AG04450 (cell line): ENCODE measurements at regions of chr9 and their contacts with region 1.

Region 1: GRCh38 chr9:4077499-4078102 is 222.3 kb downstream of the GLIS3 start:
- DNase-seq: peak; percentile 29
- H3K4me3 ChIP-seq: no peak overlapping the region
- H3K27ac ChIP-seq: no peak overlapping the region
- H3K27me3 ChIP-seq: no peaks in the 10 kb centered on the region
- CTCF ChIP-seq: peak; percentile 70

Region 2: DNA sequence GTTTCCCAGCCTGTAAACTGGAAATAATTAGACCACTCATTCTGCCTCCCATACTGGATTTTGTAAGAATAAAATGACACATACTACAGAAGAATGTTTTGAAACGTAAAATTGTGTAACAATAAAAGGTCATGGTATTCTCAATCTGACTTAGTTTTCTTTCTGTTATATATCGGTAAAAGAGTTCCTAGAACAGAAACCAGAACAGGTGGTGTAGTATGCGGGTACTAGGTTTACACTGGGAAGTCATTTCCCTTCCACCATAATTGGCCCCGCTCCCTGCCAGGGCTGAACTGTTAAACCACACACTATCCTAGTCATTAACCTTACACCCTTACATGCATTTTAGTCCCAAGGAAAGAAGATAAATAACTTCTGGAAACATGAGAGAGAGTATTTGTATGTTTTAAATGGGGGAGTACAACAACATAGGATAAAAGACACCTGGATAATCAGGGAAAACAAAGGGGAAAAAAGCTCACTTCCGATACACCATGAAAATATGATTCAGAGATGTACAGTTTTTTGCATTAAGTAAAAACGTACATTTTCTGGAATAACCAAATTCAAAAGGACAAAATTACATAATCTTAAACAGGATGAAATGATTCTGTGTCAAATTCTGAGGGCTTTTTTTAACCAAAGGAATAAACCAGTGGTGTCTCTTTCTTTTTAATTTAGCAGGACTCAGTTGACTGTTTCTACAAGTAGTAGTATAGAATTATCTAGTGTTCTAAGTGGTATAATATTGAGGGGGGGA is 22.6 kb after region 1 on chr9:
- CTCF ChIA-PET with region 1: interaction called, 12 read pairs
- POLR2A ChIA-PET with region 1: no interaction called
- DNase-seq: no peak
- H3K4me3 ChIP-seq: no peak overlapping the region
- H3K27ac ChIP-seq: no peak overlapping the region
- H3K27me3 ChIP-seq: no peaks in the 10 kb centered on the region
- CTCF ChIP-seq: no peak

Region 3: DNA sequence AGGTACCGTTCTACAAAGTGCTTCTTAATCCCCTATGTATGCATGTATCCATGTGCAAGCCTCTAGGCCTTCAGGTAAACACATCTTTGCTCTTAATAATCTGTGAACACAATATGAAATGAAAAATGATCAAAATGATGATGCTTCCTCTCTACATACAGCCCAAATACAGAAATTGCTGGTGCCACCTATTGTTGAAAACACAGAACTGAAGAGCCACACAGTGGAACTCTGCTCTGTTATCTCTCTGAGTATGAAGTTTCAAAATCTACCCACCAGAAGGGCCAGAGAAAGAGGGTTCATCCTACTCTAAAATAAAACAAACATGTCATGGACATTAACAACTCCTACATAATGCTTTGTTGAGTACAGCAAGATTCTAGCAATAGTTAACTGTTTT is 151.0 kb after region 1 on chr9:
- CTCF ChIA-PET with region 1: interaction called, 21 read pairs
- POLR2A ChIA-PET with region 1: no interaction called
- DNase-seq: no peak
- H3K4me3 ChIP-seq: no peak overlapping the region
- H3K27ac ChIP-seq: no peak overlapping the region
- H3K27me3 ChIP-seq: no peaks in the 10 kb centered on the region
- CTCF ChIP-seq: peak; percentile 69